Heart right ventricle (tissue), 16 donors: ENCODE measurements at regions of chr16 and their contacts with region 1.

Region 1: DNA sequence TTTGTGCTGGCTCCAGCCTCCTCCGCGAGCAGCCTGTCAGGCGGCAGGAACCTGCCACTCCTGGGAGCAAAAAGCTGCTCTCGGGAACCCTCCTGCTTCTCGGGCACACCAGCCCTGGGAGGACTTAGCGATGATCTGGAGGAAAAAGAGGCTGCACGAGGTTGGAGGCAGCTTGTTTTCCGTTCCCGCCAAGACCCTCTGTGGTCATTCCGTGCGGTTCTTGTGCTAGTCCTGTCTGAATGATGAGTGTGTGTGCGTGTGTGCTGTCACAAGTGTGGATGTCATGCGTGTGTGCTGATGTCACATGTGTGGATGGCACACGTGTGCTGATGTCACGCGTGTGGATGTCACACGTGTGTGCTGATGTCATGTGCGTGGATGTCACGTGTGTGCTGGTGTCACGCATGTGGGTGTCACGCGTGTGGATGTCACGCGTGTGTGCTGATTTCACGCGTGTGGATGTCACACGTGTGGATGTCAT is 150.0 kb downstream of the NPIPB11 start:
- DNase-seq: no peak
- ATAC-seq: no peak
- H3K4me3 ChIP-seq: no peak overlapping the region
- H3K27ac ChIP-seq: peak overlapping the region in 1 of 10 donors; percentile 64
- H3K4me1 ChIP-seq: peaks cover 4 to 44% (median 15%) of the 10 kb centered on the region in 9 donors
- H3K27me3 ChIP-seq: no peaks in the 10 kb centered on the region
- CTCF ChIP-seq: no peak

Region 2: GRCh38 chr16:28974437-28975157 is 281.9 kb before region 1 on chr16 and contains the start of gene SPNS1:
- intact Hi-C with region 1: loop called in 1 of 10 experiments (anchors 10 kb)
- DNase-seq: peak; percentile 97
- ATAC-seq: peak; percentile 95 to 99 (median 98)
- H3K4me3 ChIP-seq: peak within 1 kb of the TSS; percentile 59 to 98 (median 88)
- H3K27ac ChIP-seq: peak within 1 kb of the TSS in 9 of 10 donors; percentile 62 to 89 (median 78)
- H3K4me1 ChIP-seq: peaks cover 7 to 26% (median 19%) of the 10 kb centered on the region in 9 donors
- H3K27me3 ChIP-seq: no peaks in the 10 kb centered on the region
- CTCF ChIP-seq: no peak
- total RNA-seq, gene SPNS1: 12.9 to 23.3 (median 17.2) TPM

Region 3: DNA sequence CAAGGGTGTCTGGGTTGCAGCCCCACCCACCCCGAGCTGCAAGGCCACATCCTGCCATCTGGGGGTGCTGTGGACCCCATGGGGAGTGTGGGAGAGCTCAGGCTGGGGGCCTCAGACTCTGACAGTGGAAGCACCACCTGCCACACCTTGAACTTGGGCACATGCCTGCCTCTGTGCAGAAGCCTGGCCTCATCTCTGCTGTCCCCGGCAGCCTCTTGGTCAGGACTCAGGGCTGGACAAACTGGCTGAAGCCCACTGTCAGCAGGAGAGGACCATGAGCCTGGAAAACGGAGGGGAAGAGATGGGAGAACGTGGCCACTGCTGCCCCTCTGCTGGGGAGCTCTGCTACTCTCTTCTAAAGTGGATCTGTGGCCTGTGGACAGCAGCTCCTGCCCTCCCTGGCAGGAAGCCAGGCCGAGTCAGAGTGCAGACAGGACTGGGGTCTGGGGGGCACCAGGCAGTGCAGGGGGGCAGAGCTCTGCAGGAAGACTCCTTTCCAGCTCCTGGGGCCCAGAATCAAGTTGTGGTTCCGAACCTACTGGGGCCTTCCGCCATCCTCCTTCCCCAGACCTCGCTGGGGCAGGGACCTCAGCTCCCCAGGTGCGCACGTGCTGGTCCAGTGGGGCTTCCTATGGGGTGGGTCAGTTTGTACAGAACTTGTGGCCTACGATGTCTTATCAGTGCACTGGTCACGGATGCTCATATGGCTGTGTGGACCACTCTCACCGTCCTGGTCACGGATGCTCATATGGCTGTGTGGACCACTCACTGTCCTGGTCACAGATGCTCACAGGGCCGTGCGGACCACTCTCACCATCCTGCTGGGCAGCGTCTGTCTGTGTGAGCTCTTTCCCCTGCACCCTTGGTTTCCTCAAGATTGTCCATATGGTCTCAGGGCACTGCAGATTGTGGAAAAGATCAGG is 64.0 kb before region 1 on chr16:
- intact Hi-C with region 1: no loop called
- DNase-seq: no peak
- ATAC-seq: peak in 3 of 8 donors; percentile 9 to 28 (median 16)
- H3K4me3 ChIP-seq: no peak overlapping the region
- H3K27ac ChIP-seq: no peak overlapping the region
- H3K4me1 ChIP-seq: no peaks in the 10 kb centered on the region
- H3K27me3 ChIP-seq: no peaks in the 10 kb centered on the region
- CTCF ChIP-seq: peak in 2 of 9 donors; percentile 9